ENCODE measurements at regions of chr6 and their contacts with region 1.

Region 1: DNA sequence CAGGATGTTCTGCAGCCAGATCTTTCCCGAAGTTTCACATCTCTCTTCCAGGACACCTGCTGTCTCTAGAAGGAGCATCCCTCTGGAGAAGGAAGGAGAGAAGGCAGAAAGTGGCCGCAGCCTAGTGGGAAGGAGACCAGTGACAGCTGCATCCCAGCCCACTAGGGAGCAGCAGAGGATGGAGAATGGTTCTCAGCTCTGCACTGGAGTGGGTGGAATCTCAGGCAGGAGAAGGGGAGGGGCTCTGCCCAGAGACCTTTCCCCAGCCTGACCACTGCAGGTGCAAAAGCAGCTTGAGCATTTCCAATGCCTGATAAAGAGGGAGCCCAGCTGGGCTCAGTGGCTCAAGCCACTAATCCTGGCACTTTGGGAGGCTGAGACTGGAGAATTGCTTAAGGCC is 32.3 kb downstream of the NCR2 start:
- DNase-seq: peak; percentile 36
- ATAC-seq: no peak
- H3K4me3 Mint-ChIP-seq: no peak overlapping the region
- H3K27ac Mint-ChIP-seq: no peak overlapping the region
- H3K4me1 Mint-ChIP-seq: peaks cover 15% of the 10 kb centered on the region
- H3K27me3 Mint-ChIP-seq: peaks cover 43% of the 10 kb centered on the region

Region 2: DNA sequence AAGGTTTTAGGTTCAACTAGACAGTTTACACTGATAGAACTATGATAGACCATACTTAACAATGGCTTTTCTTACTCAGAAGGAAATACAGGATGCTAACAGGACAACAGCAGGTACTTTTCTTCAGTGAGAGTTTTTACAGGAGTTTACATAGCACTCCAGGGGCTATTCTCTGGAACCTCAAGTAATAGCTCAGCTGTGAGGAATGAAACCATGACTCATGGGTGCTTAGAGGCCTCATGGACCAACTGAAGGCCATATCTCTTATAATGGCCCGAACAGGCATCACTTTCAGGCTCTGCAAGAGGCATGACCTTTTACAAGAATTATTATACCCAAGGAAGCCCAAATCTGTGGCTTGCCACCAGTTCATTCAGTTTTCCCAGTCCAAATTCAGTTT is 245.3 kb before region 1 on chr6:
- CTCF ChIA-PET with region 1: no interaction called
- POLR2A ChIA-PET with region 1: no interaction called
- intact Hi-C with region 1: no loop called
- DNase-seq: no peak
- ATAC-seq: no peak
- H3K4me3 Mint-ChIP-seq: no peak overlapping the region
- H3K27ac Mint-ChIP-seq: no peak overlapping the region
- H3K4me1 Mint-ChIP-seq: no peaks in the 10 kb centered on the region
- H3K27me3 Mint-ChIP-seq: no peaks in the 10 kb centered on the region

Region 3: GRCh38 chr6:41334482-41335040 is 33.1 kb before region 1 on chr6:
- CTCF ChIA-PET with region 1: interaction called, 10 read pairs
- POLR2A ChIA-PET with region 1: no interaction called
- intact Hi-C with region 1: no loop called
- DNase-seq: no peak
- ATAC-seq: peak; percentile 5
- H3K4me3 Mint-ChIP-seq: no peak overlapping the region
- H3K27ac Mint-ChIP-seq: peak overlapping the region; percentile 73
- H3K4me1 Mint-ChIP-seq: peaks cover 33% of the 10 kb centered on the region
- H3K27me3 Mint-ChIP-seq: no peaks in the 10 kb centered on the region

Region 4: GRCh38 chr6:41424370-41425058 is 56.8 kb after region 1 on chr6:
- CTCF ChIA-PET with region 1: interaction called, 7 read pairs
- POLR2A ChIA-PET with region 1: no interaction called
- intact Hi-C with region 1: loop called (anchors 1 to 2 kb)
- DNase-seq: peak; percentile 89
- ATAC-seq: peak; percentile 41
- H3K4me3 Mint-ChIP-seq: no peak overlapping the region
- H3K27ac Mint-ChIP-seq: no peak overlapping the region
- H3K4me1 Mint-ChIP-seq: peaks cover 12% of the 10 kb centered on the region
- H3K27me3 Mint-ChIP-seq: peaks cover 23% of the 10 kb centered on the region

Region 5: DNA sequence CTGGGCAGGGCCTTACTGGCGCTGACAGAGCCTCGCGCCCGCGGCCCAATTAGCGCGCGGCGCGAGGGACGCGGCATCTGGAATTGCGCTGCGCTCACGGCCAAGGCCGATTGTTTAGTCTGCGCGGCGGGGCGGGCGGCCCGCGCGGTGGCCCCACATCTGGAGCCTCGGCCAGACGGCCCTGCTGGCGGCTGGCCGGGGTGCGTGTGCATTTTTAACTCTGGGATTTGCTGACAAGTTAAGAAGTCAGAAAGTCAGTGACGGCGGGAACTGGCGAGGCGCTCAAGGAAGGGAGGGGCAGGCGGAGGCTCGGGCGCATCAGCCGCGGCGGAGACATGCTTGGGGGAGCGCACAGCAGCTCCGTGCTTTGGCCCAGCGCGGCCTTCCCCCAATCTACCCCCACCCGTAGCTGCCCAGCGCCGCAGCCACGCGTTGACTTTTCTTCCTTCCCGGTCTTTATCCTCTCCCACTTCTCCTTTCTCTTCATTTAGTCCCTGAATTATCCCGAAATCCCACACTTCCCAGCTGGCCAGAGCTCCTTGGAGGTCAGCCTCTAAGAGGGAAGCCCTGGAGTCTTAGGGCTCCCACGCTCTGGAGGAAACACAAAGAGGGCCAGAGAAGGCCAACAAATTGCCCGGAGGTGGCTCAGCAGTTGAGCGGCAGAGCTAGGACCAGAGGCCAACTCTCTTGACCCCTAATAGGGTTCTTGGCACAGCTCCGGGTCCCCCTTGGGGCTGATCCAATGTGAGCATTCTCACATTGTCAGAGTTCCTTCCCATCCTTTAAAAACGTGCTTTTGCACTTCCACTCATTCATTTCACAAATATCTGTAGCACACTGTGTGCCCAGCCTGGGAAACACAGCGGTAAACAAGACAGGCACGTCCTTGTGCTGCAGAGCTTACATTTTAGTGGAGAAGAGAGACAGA is 137.7 kb after region 1 on chr6:
- CTCF ChIA-PET with region 1: no interaction called
- POLR2A ChIA-PET with region 1: no interaction called
- intact Hi-C with region 1: loop called in 1 of 2 experiments (anchors 5 kb)
- DNase-seq: peak; percentile 52
- ATAC-seq: peak; percentile 57
- H3K4me3 Mint-ChIP-seq: no peak overlapping the region
- H3K27ac Mint-ChIP-seq: no peak overlapping the region
- H3K4me1 Mint-ChIP-seq: peaks cover 13% of the 10 kb centered on the region
- H3K27me3 Mint-ChIP-seq: peaks cover 52% of the 10 kb centered on the region

Region 6: GRCh38 chr6:41602864-41603608 is 235.3 kb after region 1 on chr6:
- CTCF ChIA-PET with region 1: interaction called, 7 read pairs
- POLR2A ChIA-PET with region 1: no interaction called
- intact Hi-C with region 1: loop called in 1 of 2 experiments (anchors 2 kb)
- DNase-seq: peak; percentile 86
- ATAC-seq: peak; percentile 93
- H3K4me3 Mint-ChIP-seq: no peak overlapping the region
- H3K27ac Mint-ChIP-seq: no peak overlapping the region
- H3K4me1 Mint-ChIP-seq: peaks cover 3% of the 10 kb centered on the region
- H3K27me3 Mint-ChIP-seq: no peaks in the 10 kb centered on the region